OCI-LY7 (cell line): ENCODE measurements at regions of chrX and their contacts with region 1.

Region 1: GRCh38 chrX:14015294-14015693 is 14.4 kb downstream of the GEMIN8 start:
- DNase-seq: no peak
- H3K4me3 ChIP-seq: no peak overlapping the region
- H3K27ac ChIP-seq: no peak overlapping the region
- H3K4me1 ChIP-seq: no peaks in the 10 kb centered on the region
- CTCF ChIP-seq: no peak

Region 2: DNA sequence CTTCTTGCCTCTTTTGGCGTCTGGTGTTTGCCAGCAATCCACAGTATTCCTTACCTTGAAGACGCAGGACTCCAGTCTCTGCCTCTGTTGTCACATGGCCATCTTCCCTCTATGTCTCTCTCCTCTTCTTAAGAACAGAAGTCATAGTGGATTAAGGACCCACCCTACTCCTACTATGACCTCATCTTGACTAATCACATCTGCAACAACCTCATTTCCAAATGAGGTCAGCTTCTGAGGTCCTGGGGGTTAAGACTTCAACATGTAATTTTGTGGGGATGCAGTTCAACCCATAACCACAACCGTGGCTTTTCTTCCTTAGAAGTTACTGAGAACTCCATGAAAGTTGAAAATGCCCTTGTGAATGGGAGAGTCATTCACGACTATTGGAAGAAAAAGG is 1085.6 kb before region 1 on chrX:
- CTCF ChIA-PET with region 1: no interaction called
- POLR2A ChIA-PET with region 1: no interaction called
- intact Hi-C with region 1: loop called (anchors 10 kb)
- DNase-seq: no peak
- H3K4me3 ChIP-seq: no peak overlapping the region
- H3K27ac ChIP-seq: no peak overlapping the region
- H3K4me1 ChIP-seq: no peaks in the 10 kb centered on the region
- CTCF ChIP-seq: no peak

Region 3: GRCh38 chrX:13966071-13966792 is 49.1 kb before region 1 on chrX:
- CTCF ChIA-PET with region 1: no interaction called
- POLR2A ChIA-PET with region 1: no interaction called
- intact Hi-C with region 1: no loop called
- DNase-seq: no peak
- H3K4me3 ChIP-seq: no peak overlapping the region
- H3K27ac ChIP-seq: no peak overlapping the region
- H3K4me1 ChIP-seq: no peaks in the 10 kb centered on the region
- CTCF ChIP-seq: no peak